H1 (cell line): ENCODE measurements at regions of chr19 and their contacts with region 1.

Region 1: DNA sequence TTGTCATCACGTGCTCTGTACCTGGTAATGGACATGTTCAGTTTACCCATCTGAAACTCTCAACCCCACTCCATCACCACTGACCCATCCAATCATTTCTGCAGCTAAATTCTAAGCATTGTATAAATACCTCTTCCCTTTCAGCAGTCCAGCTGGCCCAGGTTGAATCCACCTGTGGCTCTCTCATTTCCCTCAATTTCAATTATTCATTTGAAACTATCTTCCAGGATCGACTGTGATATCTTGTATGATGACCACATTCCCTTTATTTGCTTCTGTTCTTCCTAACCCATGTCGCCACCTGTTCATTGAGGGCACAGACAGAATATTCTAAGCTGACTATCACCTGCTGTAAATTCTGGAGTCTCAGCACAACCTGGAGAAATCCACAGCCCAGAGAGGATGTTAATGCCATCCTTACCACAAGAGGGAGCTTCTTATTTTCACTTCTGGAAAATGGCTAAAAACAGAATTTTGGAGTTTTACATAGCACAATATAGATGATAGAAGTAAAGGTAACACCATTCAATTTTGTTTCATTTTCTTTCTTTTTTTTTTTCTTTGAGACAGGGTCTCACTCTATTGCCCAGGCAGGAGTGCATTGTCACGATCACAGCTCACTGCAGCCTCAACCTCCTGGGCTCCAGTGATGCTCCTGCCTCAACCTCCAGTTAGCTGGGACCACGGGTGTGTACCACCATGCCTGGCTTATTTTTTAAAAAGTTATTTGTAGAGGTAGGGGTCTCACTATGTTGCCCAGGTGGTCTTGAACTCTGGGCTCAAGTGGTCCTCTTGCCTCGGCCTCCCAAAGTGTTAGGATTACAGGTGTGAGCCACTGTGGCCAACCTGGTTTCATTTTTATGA is 38.6 kb downstream of the ZNF823 start:
- DNase-seq: no peak
- H3K4me3 ChIP-seq: no peak overlapping the region
- H3K27ac ChIP-seq: no peak overlapping the region
- H3K4me1 ChIP-seq: peaks cover 0 to under 1% (median 0%) of the 10 kb centered on the region in 4 experiments; a peak in 3 of 7 replicates
- H3K27me3 ChIP-seq: peaks cover 0 to 3% (median 0%) of the 10 kb centered on the region in 4 experiments; a peak in 2 of 7 replicates
- CTCF ChIP-seq: peak in 2 of 3 experiments; percentile 51 to 72; a peak in 3 of 4 replicates
- EP300 ChIP-seq: no peak
- POLR2A ChIP-seq: no peak
- RAD21 ChIP-seq: peak; percentile 40 to 42

Region 2: GRCh38 chr19:11673608-11674041 is 26.5 kb before region 1 on chr19:
- CTCF ChIA-PET with region 1: interaction called, 10 read pairs
- POLR2A ChIA-PET with region 1: interaction called, 6 read pairs
- DNase-seq: peak; percentile 44 to 80
- H3K4me3 ChIP-seq: peak overlapping the region; percentile 46 to 72 (median 68)
- H3K27ac ChIP-seq: no peak overlapping the region
- H3K4me1 ChIP-seq: peaks cover 0 to 3% (median 0%) of the 10 kb centered on the region in 4 experiments; a peak in 2 of 7 replicates
- H3K27me3 ChIP-seq: peaks cover 0 to 3% (median 1%) of the 10 kb centered on the region in 4 experiments; a peak in 1 of 7 replicates
- CTCF ChIP-seq: peak; percentile 86 to 95 (median 93)
- EP300 ChIP-seq: no peak
- POLR2A ChIP-seq: no peak
- RAD21 ChIP-seq: peak; percentile 83 to 88

Region 3: DNA sequence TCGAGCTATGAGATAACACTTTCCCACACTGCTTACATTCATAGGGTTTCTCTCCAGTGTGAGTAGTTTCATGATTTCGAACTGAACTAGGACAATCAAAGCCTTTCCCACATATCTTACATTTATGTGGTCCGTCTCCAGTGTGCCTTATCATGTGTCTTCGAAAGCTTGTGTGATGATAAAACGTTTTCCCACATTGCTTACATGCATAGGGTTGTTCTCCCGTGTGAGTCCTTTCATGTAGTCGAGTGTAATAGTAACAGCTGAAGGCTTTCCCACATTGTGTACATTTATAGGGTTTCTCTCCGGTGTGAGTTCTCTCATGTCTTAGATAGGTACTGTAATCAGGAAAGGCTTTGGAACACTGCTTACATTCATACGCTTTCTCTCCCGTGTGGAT is 22.3 kb after region 1 on chr19:
- CTCF ChIA-PET with region 1: interaction called, 13 read pairs
- POLR2A ChIA-PET with region 1: interaction called, 4 read pairs
- DNase-seq: no peak
- H3K4me3 ChIP-seq: no peak overlapping the region
- H3K27ac ChIP-seq: no peak overlapping the region
- H3K4me1 ChIP-seq: no peaks in the 10 kb centered on the region
- H3K27me3 ChIP-seq: no peaks in the 10 kb centered on the region
- CTCF ChIP-seq: no peak
- EP300 ChIP-seq: no peak
- POLR2A ChIP-seq: no peak
- RAD21 ChIP-seq: no peak

Region 4: GRCh38 chr19:11738746-11739620 is 38.8 kb after region 1 on chr19 and contains the start of gene ZNF823:
- CTCF ChIA-PET with region 1: interaction called, 15 read pairs
- POLR2A ChIA-PET with region 1: interaction called, 4 read pairs
- DNase-seq: peak; percentile 94 to 98
- H3K4me3 ChIP-seq: peak within 1 kb of the TSS; percentile 51 to 79 (median 74)
- H3K27ac ChIP-seq: no peak within 1 kb of the TSS
- H3K4me1 ChIP-seq: no peaks in the 10 kb centered on the region; a peak in 3 of 7 replicates
- H3K27me3 ChIP-seq: peaks cover 0 to 18% (median 15%) of the 10 kb centered on the region in 4 experiments; a peak in 5 of 7 replicates
- CTCF ChIP-seq: no peak
- EP300 ChIP-seq: no peak
- POLR2A ChIP-seq: peak in 1 of 2 experiments; percentile 60; a peak in 2 of 3 replicates
- RAD21 ChIP-seq: no peak
- total RNA-seq, gene ZNF823: 2.4 and 2.9 TPM in 2 replicates

Region 5: DNA sequence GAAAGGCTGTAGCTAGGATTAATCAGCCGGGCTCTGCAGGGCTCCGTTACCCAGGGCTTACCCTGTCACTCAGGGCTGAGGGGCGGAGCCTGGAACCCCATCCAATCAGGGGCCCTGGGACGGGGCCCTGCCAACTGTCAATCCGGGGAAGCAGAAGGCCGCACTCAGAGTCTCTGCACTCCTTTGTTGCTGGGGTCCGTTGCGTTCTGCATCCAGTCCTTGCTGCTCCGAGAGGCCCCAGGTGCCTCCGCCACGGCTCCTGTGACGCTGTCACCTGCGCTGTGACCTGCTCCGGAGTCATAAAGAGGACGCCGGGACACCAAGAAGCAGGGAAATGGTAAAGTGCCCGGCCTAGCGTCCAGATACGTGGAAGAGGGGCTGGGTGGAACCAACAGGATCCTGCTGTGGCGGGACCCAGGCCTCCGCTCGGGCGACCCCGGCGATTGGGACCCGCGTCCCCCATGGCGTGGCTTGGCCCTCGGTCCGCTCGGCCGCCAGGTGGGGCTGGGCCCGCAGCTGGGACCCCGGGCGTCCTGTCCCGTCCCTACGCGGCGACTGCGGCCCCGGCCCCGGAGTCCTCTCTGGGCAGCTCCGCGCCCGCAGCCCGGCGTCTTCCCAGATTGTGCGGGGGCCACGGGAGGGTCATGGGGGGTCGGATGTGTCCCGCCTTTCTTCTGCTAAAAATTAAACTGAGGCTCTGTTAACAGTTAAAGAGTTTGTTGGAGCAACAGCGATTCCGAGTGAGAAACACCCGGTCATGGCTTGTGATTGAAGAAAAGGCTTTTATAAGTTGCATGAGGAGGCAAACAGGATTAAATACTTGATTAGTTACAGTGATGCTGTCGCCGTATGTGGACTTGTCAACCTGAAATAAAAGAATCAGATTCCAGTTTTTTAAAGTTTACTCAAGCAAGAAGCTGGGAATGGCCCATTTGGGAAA is 98.5 kb after region 1 on chr19 and contains the start of gene ZNF491:
- CTCF ChIA-PET with region 1: interaction called, 14 read pairs
- POLR2A ChIA-PET with region 1: interaction called, 6 read pairs
- DNase-seq: peak; percentile 75 to 94
- H3K4me3 ChIP-seq: peak within 1 kb of the TSS; percentile 49 to 80 (median 76)
- H3K27ac ChIP-seq: no peak within 1 kb of the TSS
- H3K4me1 ChIP-seq: peaks cover 0 to 9% (median 6%) of the 10 kb centered on the region in 4 experiments; a peak in 5 of 7 replicates
- H3K27me3 ChIP-seq: peaks cover 0 to 10% (median under 1%) of the 10 kb centered on the region in 4 experiments; a peak in 2 of 7 replicates
- CTCF ChIP-seq: peak; percentile 38 to 43 (median 38)
- EP300 ChIP-seq: no peak
- POLR2A ChIP-seq: peak in 1 of 2 experiments; percentile 44; a peak in 1 of 3 replicates
- RAD21 ChIP-seq: peak in 1 of 2 experiments; percentile 38; a peak in 3 of 4 replicates
- total RNA-seq, gene ZNF491: 0.78 and 0.84 TPM in 2 replicates